ENCODE measurements at regions of chr19 and their contacts with region 1.

Region 1: DNA sequence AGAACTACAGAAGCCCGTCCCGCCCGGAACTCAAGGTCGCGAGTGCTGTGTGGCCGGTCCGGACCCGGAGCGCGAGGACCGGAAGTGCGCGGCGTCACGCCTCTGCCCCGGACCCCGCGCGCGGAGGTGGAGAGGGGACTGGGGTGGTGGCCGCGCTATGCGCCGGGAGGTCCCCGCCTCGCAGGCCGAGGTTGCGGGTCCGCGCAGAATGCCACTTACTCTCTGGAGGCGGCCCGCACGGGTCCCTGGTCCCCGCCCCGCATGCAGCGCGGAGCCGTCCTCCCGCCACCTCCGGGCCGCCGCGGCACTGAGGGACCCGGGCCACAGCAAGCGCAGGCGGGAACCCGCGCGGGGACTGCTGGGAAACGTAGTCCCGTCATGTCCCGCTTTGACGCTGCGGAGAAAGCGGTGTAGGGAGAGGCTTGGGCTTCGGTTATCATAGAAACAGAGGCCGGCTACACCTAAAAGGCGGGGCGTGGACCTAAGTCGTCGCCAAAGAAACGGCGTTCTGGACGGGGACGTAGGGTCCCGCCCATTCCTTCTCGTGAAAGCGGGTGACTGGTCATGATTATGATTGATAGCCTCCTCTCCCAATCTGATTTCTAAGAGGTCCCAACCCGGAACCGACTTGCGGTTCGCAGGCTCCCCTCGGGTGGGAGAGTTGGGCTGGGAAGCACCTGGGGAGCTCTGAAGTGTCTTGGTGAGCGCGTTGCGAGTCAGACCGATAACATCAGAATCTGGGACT is at the start of gene ZNF837:
- DNase-seq: peak; percentile 98
- H3K4me3 Mint-ChIP-seq: peak within 1 kb of the TSS; percentile 87
- H3K27ac Mint-ChIP-seq: peak within 1 kb of the TSS; percentile 89
- H3K4me1 Mint-ChIP-seq: peaks cover 22% of the 10 kb centered on the region
- H3K27me3 Mint-ChIP-seq: no peaks in the 10 kb centered on the region
- total RNA-seq, gene ZNF837: 0.86 and 1.4 TPM in 2 replicates

Region 2: DNA sequence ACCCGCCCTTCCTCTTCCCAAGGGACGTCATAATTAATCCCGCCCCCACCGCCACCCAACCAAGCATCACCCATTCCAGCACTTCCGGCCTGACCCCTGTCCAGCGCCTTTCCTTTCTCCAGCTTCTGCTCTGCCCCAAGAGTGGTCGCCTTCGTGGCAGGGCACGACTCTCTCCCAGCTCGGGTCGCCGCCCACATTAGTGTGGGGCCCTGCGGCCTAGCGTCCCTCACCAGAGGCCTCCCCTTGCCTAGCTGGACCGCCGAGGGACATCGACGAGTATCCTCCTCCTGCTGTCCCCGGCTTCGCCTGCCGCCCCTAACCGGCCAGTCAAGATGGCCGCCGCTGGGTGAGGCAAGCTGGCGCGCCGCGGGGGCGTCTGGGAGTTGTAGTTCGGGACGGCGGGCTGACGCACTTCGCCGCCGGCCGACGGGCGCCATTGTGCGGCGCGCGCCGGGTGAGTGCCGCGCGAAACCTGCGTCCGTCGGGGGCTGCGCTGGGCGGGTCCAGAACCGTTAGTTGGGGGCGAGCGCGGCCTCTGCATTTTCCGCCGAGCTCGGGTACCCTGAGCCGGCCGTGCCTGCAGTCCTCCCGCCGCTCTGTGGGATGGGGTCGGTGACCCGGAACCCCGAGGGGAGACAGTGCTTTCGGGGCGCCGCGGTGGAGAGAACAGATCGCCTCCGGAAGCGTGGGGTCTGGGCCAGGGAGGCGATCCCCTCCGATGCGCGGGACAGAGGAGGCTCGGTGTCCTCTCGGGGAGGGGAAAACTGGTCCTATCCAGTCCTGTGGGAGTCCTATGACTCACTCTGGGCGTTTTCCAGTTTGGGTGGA is 197.7 kb before region 1 on chr19 and contains the start of gene ZNF274:
- intact Hi-C with region 1: loop called (anchors 1 kb)
- DNase-seq: peak; percentile 90
- H3K4me3 Mint-ChIP-seq: peak within 1 kb of the TSS; percentile 93
- H3K27ac Mint-ChIP-seq: peak within 1 kb of the TSS; percentile 99
- H3K4me1 Mint-ChIP-seq: peaks cover 16% of the 10 kb centered on the region
- H3K27me3 Mint-ChIP-seq: no peaks in the 10 kb centered on the region
- total RNA-seq, gene ZNF274: 18.2 and 21.2 TPM in 2 replicates

Region 3: GRCh38 chr19:58362272-58362994 is 18.5 kb before region 1 on chr19 and contains the start of gene ZNF497:
- intact Hi-C with region 1: loop called (anchors 1 kb)
- DNase-seq: peak; percentile 95
- H3K4me3 Mint-ChIP-seq: peak within 1 kb of the TSS; percentile 94
- H3K27ac Mint-ChIP-seq: peak within 1 kb of the TSS; percentile 95
- H3K4me1 Mint-ChIP-seq: peaks cover 7% of the 10 kb centered on the region
- H3K27me3 Mint-ChIP-seq: no peaks in the 10 kb centered on the region
- total RNA-seq, gene ZNF497: 0.76 and 0.93 TPM in 2 replicates

Region 4: DNA sequence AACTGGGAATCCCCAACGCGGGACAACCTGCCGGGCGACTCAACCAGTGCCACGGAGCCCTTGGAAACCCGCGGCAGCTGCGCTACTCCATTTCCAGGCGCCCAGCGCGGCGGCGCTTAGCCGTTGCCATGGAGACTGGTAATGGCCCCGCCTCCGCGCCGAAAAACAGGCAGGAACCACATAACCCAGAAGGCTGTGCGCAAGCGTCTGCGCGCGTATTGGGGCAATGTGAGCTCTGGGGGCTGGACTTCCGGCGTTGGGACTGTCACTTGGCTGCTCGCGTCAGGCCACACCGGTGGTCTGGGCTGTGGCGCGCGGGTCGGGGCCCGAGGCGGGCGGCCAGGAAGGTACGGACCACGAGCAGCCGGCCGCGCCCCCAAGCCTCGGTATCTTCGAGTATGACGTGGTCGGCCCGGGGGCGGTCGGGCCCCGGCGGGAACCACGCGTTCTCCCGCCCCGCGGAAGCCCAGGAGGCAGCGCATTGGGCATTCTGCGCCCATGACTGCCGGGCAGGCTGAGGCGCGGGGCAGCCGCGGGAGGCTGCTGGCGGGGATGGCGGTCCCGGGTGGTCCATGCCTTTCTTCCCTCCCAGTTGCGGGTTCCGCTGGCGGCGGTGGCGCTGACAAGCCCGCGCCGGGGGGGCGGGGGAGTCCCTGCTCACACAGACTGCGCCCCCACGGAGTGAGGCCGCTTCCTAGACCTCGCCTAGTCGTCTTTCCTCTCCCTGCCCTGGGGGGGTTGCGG is 70.6 kb after region 1 on chr19 and contains the start of gene ZNF324B:
- intact Hi-C with region 1: loop called (anchors 1 kb)
- DNase-seq: peak; percentile 95
- H3K4me3 Mint-ChIP-seq: peak within 1 kb of the TSS; percentile 85
- H3K27ac Mint-ChIP-seq: peak within 1 kb of the TSS; percentile 48
- H3K4me1 Mint-ChIP-seq: peaks cover 18% of the 10 kb centered on the region
- H3K27me3 Mint-ChIP-seq: peaks cover 7% of the 10 kb centered on the region
- total RNA-seq, gene ZNF324B: 14.3 and 15.1 TPM in 2 replicates

Region 5: GRCh38 chr19:58499021-58499927 is 118.4 kb after region 1 on chr19:
- intact Hi-C with region 1: loop called (anchors 1 kb)
- DNase-seq: peak; percentile 96
- H3K4me3 Mint-ChIP-seq: peak overlapping the region; percentile 91
- H3K27ac Mint-ChIP-seq: peak overlapping the region; percentile 91
- H3K4me1 Mint-ChIP-seq: peaks cover 21% of the 10 kb centered on the region
- H3K27me3 Mint-ChIP-seq: peaks cover 7% of the 10 kb centered on the region

Region 6: DNA sequence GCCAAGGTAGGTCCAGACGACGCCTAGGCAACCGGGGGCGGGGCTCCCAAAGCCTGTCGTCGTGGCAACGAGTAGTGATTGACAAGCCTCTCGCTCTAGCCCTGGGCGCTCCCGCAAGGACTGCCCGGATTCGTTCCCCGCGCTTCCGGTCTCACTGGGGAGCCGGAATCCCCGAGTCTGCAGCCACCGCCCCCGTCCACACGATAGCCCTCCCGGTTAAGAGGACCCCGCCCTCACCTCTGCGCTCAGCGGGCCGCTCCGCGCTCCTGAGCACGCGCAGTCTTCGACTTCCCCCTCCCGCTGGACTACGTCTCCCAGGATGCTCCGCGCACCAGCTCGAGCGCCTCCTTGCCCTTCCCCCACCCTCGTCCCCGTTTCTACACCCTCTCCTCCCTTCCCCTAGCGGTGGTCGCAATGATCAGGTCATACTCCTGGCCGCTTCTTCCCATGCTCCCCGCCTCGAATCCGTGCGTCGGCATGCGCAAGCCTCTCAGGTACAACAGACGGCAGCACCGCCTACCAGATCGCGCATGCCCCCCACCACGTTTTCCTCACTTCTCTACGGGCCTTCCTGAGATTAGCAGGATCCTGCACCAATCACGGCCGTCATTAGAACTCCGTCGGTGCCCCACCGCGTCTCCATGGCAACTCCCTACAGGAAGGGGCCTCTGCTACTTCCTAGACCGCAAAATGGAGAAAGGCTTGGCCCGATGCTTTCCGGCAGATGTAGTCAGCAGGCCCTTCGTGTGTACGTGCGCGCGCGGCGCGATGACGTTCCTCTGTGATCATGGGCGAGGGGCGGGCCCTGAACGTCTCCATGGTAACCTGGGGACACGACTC is 192.1 kb after region 1 on chr19 and contains the start of gene MZF1:
- intact Hi-C with region 1: loop called (anchors 1 kb)
- DNase-seq: peak; percentile 100
- H3K4me3 Mint-ChIP-seq: peak within 1 kb of the TSS; percentile 95
- H3K27ac Mint-ChIP-seq: peak within 1 kb of the TSS; percentile 99
- H3K4me1 Mint-ChIP-seq: peaks cover 41% of the 10 kb centered on the region
- H3K27me3 Mint-ChIP-seq: no peaks in the 10 kb centered on the region
- total RNA-seq, gene MZF1: 19.6 and 21.6 TPM in 2 replicates

Measured in activated T-helper 1 cell treated with anti-CD3 and anti-CD28 coated beads, Interleukin-12 subunit alpha, Interleukin-12 subunit beta, Interleukin-2, Interleukin-4 antibody, amounts not matched to agents 30 ng/mL and 10 ng/mL and 1 ng/mL, durations not matched to agents 14 hours and 24 hours and 36 hours (primary cell).